ENCODE measurements at regions of chr10 and their contacts with region 1.

Region 1: DNA sequence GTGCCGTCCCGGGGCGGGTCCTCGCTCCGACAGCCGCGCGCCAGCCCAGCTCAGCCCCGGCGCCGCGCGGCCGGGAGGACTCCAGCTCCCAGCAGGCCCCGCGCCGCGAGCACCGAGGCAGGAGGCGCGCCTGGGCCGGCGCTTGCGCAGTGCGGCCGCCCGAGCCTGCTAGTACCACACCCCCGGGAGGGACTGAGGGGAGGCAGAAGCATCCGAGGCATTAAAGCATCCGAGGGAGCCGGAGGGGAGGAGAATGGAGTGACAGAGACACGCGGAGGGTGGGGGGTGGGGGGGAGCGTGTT is at the start of gene GRK5:
- DNase-seq: peak; percentile 96
- H3K4me3 Mint-ChIP-seq: peak within 1 kb of the TSS; percentile 100
- H3K27ac Mint-ChIP-seq: peak within 1 kb of the TSS; percentile 91
- H3K4me1 Mint-ChIP-seq: peaks cover 38% of the 10 kb centered on the region
- H3K27me3 Mint-ChIP-seq: no peaks in the 10 kb centered on the region
- total RNA-seq, gene GRK5: 22.7 to 23.0 TPM

Region 2: DNA sequence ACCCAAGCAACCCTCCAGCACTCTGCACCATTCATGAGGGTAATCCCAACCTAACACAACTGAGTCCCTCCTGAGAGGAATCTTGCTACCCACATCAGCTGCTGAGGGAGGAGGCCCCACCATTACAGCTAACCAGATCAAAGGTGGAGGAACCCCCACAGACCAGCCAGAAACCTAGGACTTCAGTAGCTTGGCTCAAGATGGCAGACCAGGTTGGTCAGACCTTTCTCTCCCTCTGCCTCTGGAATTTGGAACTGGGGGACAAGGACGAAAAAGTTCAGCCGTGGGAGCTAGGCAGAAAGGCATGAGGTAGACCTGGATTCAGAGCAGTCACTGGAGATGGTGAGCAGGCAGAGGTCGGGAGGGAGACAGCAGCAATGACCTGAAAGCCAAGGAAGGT is 351.2 kb before region 1 on chr10:
- CTCF ChIA-PET with region 1: no interaction called
- POLR2A ChIA-PET with region 1: no interaction called
- intact Hi-C with region 1: no loop called
- DNase-seq: no peak
- H3K4me3 Mint-ChIP-seq: no peak overlapping the region
- H3K27ac Mint-ChIP-seq: no peak overlapping the region
- H3K4me1 Mint-ChIP-seq: no peaks in the 10 kb centered on the region
- H3K27me3 Mint-ChIP-seq: peaks cover 2% of the 10 kb centered on the region

Region 3: GRCh38 chr10:119120413-119120867 is 86.9 kb before region 1 on chr10:
- CTCF ChIA-PET with region 1: no interaction called
- POLR2A ChIA-PET with region 1: no interaction called
- intact Hi-C with region 1: no loop called
- DNase-seq: no peak
- H3K4me3 Mint-ChIP-seq: no peak overlapping the region
- H3K27ac Mint-ChIP-seq: no peak overlapping the region
- H3K4me1 Mint-ChIP-seq: peaks cover 3% of the 10 kb centered on the region
- H3K27me3 Mint-ChIP-seq: no peaks in the 10 kb centered on the region

Region 4: DNA sequence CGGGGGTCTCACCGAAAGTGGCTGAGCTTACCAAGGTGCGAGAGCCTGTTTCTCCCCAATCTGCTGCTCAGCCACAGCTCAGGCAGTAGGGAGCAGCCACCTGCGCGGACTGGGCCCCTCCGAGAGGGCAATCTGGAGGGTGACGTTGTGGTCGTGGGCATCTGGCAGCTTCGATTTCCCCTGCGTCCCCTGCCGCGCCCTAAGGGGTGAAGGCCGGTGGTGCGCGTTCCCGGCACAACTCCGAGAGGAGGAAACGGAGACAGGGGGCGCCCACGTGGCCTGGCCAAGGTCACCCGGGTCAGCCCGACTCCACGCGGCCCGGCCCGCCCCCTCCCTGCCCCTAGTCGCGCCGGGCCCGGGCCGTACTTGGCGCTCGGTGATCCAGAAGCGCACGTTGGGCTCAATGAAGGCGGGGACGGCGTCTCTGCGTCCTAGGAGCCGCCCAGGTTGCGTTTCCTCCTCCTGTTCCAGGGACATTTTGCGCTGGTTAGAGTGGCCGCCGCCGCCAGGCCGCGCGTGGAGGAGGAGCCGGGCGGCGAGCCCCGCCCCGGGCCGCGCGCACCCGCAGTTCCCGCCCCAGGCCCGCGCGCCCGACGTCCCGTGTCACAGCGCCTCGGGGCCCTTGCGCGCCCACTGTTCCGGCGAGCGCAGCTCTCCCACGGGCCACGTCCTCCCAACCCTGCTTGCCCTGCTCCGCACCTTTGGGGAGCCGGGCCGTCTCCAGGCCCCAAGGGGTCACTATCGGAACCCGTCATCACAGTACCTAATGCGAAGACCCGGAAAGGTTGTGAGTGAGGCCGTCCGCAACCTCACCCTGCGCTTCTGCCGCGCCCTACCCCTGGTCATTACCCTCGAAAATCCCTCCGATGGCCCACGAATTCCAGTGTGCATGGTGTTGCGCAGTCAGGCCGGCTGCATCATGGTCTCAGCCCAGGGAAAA is 41.9 kb before region 1 on chr10 and contains the start of gene SFXN4:
- CTCF ChIA-PET with region 1: interaction called, 13 read pairs
- POLR2A ChIA-PET with region 1: interaction called, 3 read pairs
- intact Hi-C with region 1: loop called (anchors 2 kb)
- DNase-seq: peak; percentile 83
- H3K4me3 Mint-ChIP-seq: peak within 1 kb of the TSS; percentile 84
- H3K27ac Mint-ChIP-seq: peak within 1 kb of the TSS; percentile 87
- H3K4me1 Mint-ChIP-seq: peaks cover 37% of the 10 kb centered on the region
- H3K27me3 Mint-ChIP-seq: no peaks in the 10 kb centered on the region
- total RNA-seq, gene SFXN4: 38.3 to 38.7 TPM

Region 5: GRCh38 chr10:119253433-119254174 is 46.3 kb after region 1 on chr10:
- CTCF ChIA-PET with region 1: interaction called, 3 read pairs
- POLR2A ChIA-PET with region 1: interaction called, 3 read pairs
- intact Hi-C with region 1: loop called (anchors 1 kb)
- DNase-seq: peak; percentile 79
- H3K4me3 Mint-ChIP-seq: no peak overlapping the region
- H3K27ac Mint-ChIP-seq: peak overlapping the region; percentile 77
- H3K4me1 Mint-ChIP-seq: peaks cover 51% of the 10 kb centered on the region
- H3K27me3 Mint-ChIP-seq: no peaks in the 10 kb centered on the region

Region 6: GRCh38 chr10:119370111-119370741 is 162.9 kb after region 1 on chr10:
- CTCF ChIA-PET with region 1: interaction called, 7 read pairs
- POLR2A ChIA-PET with region 1: no interaction called
- intact Hi-C with region 1: loop called (anchors 2 kb)
- DNase-seq: no peak
- H3K4me3 Mint-ChIP-seq: no peak overlapping the region
- H3K27ac Mint-ChIP-seq: peak overlapping the region; percentile 6
- H3K4me1 Mint-ChIP-seq: peaks cover 25% of the 10 kb centered on the region
- H3K27me3 Mint-ChIP-seq: no peaks in the 10 kb centered on the region

Region 7: GRCh38 chr10:119489991-119490326 is 282.6 kb after region 1 on chr10:
- CTCF ChIA-PET with region 1: interaction called, 17 read pairs
- POLR2A ChIA-PET with region 1: no interaction called
- intact Hi-C with region 1: loop called (anchors 2 kb)
- DNase-seq: no peak
- H3K4me3 Mint-ChIP-seq: peak overlapping the region; percentile 23
- H3K27ac Mint-ChIP-seq: peak overlapping the region; percentile 81
- H3K4me1 Mint-ChIP-seq: peaks cover 36% of the 10 kb centered on the region
- H3K27me3 Mint-ChIP-seq: no peaks in the 10 kb centered on the region

Region 8: DNA sequence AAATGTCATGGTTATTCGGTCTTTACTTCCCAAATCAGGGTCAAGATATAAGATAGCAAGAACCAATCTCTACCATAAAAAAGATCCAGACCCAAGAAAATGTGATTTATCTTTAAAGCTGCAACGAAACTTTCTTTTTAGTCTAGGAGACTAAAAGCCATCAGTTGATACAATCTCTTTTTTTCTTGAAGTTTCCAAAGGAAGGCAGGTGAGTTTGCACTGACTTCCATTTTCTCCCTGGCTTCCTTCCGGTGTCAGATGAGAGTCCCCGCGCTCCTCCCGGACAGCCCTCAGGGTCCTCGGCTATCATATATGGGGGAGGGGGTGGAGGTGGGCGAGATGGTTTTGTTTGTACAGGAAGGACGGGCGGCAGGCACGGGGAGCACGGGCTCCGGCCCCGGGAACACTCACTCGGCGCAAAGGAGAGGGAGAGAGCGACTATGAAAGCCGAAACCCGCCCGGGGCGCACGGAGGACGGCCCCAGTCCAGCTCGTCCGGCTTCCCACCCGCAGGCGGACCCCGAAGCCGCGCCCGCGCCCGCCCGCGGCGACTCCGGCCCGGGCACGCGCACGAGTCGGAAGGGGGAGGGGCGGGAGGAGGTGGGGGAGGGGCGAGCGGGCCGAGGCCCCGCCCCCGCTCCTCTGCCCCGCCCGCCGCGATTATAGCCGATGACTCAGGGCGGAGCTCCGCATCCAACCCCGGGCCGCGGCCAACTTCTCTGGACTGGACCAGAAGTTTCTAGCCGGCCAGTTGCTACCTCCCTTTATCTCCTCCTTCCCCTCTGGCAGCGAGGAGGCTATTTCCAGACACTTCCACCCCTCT is 443.6 kb after region 1 on chr10 and contains the start of gene BAG3:
- CTCF ChIA-PET with region 1: interaction called, 3 read pairs
- POLR2A ChIA-PET with region 1: no interaction called
- intact Hi-C with region 1: loop called (anchors 5 kb)
- DNase-seq: peak; percentile 87
- H3K4me3 Mint-ChIP-seq: peak within 1 kb of the TSS; percentile 95
- H3K27ac Mint-ChIP-seq: peak within 1 kb of the TSS; percentile 97
- H3K4me1 Mint-ChIP-seq: peaks cover 37% of the 10 kb centered on the region
- H3K27me3 Mint-ChIP-seq: no peaks in the 10 kb centered on the region
- total RNA-seq, gene BAG3: 26.8 to 28.1 TPM

Region 9: GRCh38 chr10:119845656-119846055 is 638.3 kb after region 1 on chr10:
- CTCF ChIA-PET with region 1: no interaction called
- POLR2A ChIA-PET with region 1: no interaction called
- intact Hi-C with region 1: no loop called
- DNase-seq: no peak
- H3K4me3 Mint-ChIP-seq: no peak overlapping the region
- H3K27ac Mint-ChIP-seq: no peak overlapping the region
- H3K4me1 Mint-ChIP-seq: no peaks in the 10 kb centered on the region
- H3K27me3 Mint-ChIP-seq: no peaks in the 10 kb centered on the region

Measured in activated CD4-positive, alpha-beta memory T cell treated with anti-CD3 and anti-CD28 coated beads for 36 hours (primary cell).